GM18951 (cell line): ENCODE measurements at regions of chrX and their contacts with region 1.

Region 1: GRCh38 chrX:140071037-140071436 is 105.7 kb upstream of the CXorf66 start:
- POLR2A ChIP-seq: no peak

Region 2: GRCh38 chrX:139642241-139642927 is 428.7 kb before region 1 on chrX:
- in situ Hi-C with region 1: no loop called
- POLR2A ChIP-seq: no peak

Region 3: DNA sequence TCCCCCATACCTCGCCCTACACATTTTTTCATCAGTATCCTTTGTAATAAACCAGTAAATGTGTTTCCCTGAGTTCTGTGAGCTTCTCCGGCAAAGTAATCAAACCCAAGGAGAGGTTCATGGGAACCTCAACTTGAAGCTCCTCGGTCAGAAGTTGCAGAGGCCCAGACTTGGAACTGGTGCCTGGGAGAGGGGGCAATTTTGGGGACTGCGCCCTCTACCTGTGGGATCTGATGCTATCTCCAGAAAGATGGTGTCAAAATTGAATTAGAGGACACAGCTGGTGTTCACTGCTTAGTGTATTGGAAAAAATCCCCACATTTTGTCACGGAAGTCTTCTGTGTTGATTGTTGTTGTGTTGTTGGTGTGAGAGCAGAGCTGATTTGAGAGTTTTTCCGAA is 208.8 kb before region 1 on chrX:
- in situ Hi-C with region 1: no loop called
- POLR2A ChIP-seq: no peak

Region 4: GRCh38 chrX:140141444-140142029 is 70.5 kb after region 1 on chrX:
- in situ Hi-C with region 1: loop called (anchors 5 kb)
- POLR2A ChIP-seq: no peak